ENCODE measurements at regions of chr6 and their contacts with region 1.

Region 1: GRCh38 chr6:152982768-152983636 is at the start of gene FBXO5:
- DNase-seq: peak; percentile 97
- H3K4me3 ChIP-seq: peak within 1 kb of the TSS; percentile 95 to 98
- H3K27ac ChIP-seq: peak within 1 kb of the TSS; percentile 95 to 99
- H3K4me1 ChIP-seq: peaks cover 5 to 19% of the 10 kb centered on the region in 2 experiments; a peak in 2 of 4 replicates
- H3K27me3 ChIP-seq: no peaks in the 10 kb centered on the region
- CTCF ChIP-seq: no peak
- EP300 ChIP-seq: 0 out of 4 replicates have a peak, but pooled peaks of 1 of the 2 experiments have one; percentile 10
- RAD21 ChIP-seq: no peak
- polyA plus RNA-seq, gene FBXO5: 10.6 and 12.5 TPM in 2 replicates

Region 2: DNA sequence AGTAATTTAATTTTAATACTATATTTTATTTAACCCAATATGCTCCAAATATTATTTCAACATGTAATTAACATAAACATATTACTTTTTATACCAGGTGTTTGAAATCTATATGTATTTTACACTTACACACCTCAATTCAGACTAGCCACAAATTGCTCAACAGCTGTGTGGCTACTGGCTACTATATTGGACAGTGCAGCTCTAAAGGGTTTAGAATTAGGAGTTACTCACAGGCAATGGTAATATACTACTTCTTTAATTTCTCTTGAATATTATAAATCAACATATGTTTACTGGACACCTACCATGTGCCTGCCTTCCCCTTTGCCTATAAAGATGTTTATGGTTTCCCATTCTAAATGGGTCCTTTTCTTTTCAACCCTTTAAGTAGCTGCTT is 17.2 kb after region 1 on chr6:
- CTCF ChIA-PET with region 1: interaction called, 3 read pairs
- POLR2A ChIA-PET with region 1: interaction called, 11 read pairs
- DNase-seq: no peak
- H3K4me3 ChIP-seq: peak overlapping the region in 1 of 2 experiments; percentile 15; a peak in 1 of 4 replicates
- H3K27ac ChIP-seq: no peak overlapping the region
- H3K4me1 ChIP-seq: peaks cover 0 to 13% of the 10 kb centered on the region in 2 experiments; a peak in 2 of 4 replicates
- H3K27me3 ChIP-seq: no peaks in the 10 kb centered on the region
- CTCF ChIP-seq: no peak
- EP300 ChIP-seq: no peak
- RAD21 ChIP-seq: no peak

Region 3: GRCh38 chr6:153059761-153060160 is 76.8 kb after region 1 on chr6:
- CTCF ChIA-PET with region 1: no interaction called
- POLR2A ChIA-PET with region 1: no interaction called
- DNase-seq: no peak
- H3K4me3 ChIP-seq: no peak overlapping the region
- H3K27ac ChIP-seq: no peak overlapping the region; a peak in 1 of 4 replicates
- H3K4me1 ChIP-seq: peaks cover 0 to 3% of the 10 kb centered on the region in 2 experiments; a peak in 1 of 4 replicates
- H3K27me3 ChIP-seq: no peaks in the 10 kb centered on the region
- CTCF ChIP-seq: no peak
- EP300 ChIP-seq: no peak
- RAD21 ChIP-seq: peak; percentile 14; the same call in 1 of the 2 replicates

Measured in SK-N-SH (cell line).